A549 (cell line): ENCODE measurements at regions of chr3 and their contacts with region 1.

Region 1: GRCh38 chr3:134308350-134308891 is 57.8 kb upstream of the RYK start:
- DNase-seq: peak; percentile 69 to 83
- ATAC-seq: peak; percentile 77 to 78
- H3K4me3 ChIP-seq: no peak overlapping the region
- H3K27ac ChIP-seq: peak overlapping the region; percentile 97 to 100
- H3K4me1 ChIP-seq: peaks cover 53% of the 10 kb centered on the region
- CTCF ChIP-seq: peak; percentile 92
- EP300 ChIP-seq: 0 out of 5 replicates have a peak, but pooled peaks of 1 of the 2 experiments have one; percentile 15
- POLR2A ChIP-seq: no peak
- RAD21 ChIP-seq: peak; percentile 99

Region 2: GRCh38 chr3:134326760-134327593 is 18.6 kb after region 1 on chr3:
- CTCF ChIA-PET with region 1: interaction called, 17 read pairs
- POLR2A ChIA-PET with region 1: interaction called, 23 read pairs
- DNase-seq: peak in 1 of 2 experiments; percentile 94
- ATAC-seq: peak; percentile 82 to 85
- H3K4me3 ChIP-seq: peak overlapping the region; percentile 26
- H3K27ac ChIP-seq: peak overlapping the region; percentile 96 to 100
- H3K4me1 ChIP-seq: peaks cover 76% of the 10 kb centered on the region
- CTCF ChIP-seq: no peak
- EP300 ChIP-seq: peak; percentile 94 to 99; a peak in 4 of 5 replicates
- POLR2A ChIP-seq: no peak
- RAD21 ChIP-seq: peak; percentile 30 to 56; a peak in 3 of 5 replicates

Region 3: DNA sequence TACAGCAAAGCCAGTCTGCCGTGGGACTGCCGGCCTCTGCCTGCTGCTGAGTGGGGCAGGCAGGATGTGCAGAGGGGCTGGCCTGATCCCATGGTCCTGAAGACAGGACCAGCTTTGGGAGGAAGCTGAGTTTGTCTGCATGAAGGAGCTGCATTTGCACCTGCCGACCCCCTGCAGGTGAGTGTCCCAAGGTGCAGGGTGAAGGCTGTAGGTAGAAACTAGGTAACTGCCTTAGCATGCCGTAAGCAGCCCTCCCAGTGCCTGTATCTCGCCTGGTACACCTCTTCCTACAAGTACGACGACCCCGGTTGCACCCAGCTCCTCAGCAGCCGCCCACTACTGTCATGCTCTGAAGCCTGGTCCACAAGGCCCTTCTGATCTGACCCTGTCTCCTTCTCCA is 30.9 kb after region 1 on chr3:
- CTCF ChIA-PET with region 1: interaction called, 12 read pairs
- POLR2A ChIA-PET with region 1: interaction called, 5 read pairs
- DNase-seq: no peak
- ATAC-seq: 0 out of 6 replicates have a peak, but pooled peaks have one; percentile 11 to 30
- H3K4me3 ChIP-seq: no peak overlapping the region
- H3K27ac ChIP-seq: peak overlapping the region; percentile 96 to 100; a peak in 3 of 6 replicates
- H3K4me1 ChIP-seq: peaks cover 48% of the 10 kb centered on the region
- CTCF ChIP-seq: no peak
- EP300 ChIP-seq: no peak
- POLR2A ChIP-seq: no peak
- RAD21 ChIP-seq: no peak

Region 4: GRCh38 chr3:134364061-134364935 is 55.9 kb after region 1 on chr3:
- CTCF ChIA-PET with region 1: interaction called, 356 read pairs
- POLR2A ChIA-PET with region 1: interaction called, 49 read pairs
- DNase-seq: peak; percentile 93 to 94
- ATAC-seq: peak; percentile 74 to 82
- H3K4me3 ChIP-seq: peak overlapping the region; percentile 31; the same call in 2 of the 3 replicates
- H3K27ac ChIP-seq: peak overlapping the region; percentile 99 to 100
- H3K4me1 ChIP-seq: peaks cover 97% of the 10 kb centered on the region
- CTCF ChIP-seq: no peak
- EP300 ChIP-seq: peak; percentile 68 to 86; a peak in 3 of 5 replicates
- POLR2A ChIP-seq: no peak
- RAD21 ChIP-seq: peak in 1 of 2 experiments; percentile 37; a peak in 2 of 5 replicates

Region 5: GRCh38 chr3:134485718-134486576 is 177.5 kb after region 1 on chr3 and contains the starts of genes ANAPC13 and CEP63:
- CTCF ChIA-PET with region 1: interaction called, 438 read pairs
- POLR2A ChIA-PET with region 1: interaction called, 3 read pairs
- DNase-seq: peak; percentile 87 to 98
- ATAC-seq: peak; percentile 91 to 93
- H3K4me3 ChIP-seq: peak within 1 kb of the TSS; percentile 84
- H3K27ac ChIP-seq: peak within 1 kb of the TSS; percentile 95 to 99
- H3K4me1 ChIP-seq: peaks cover 21% of the 10 kb centered on the region
- CTCF ChIP-seq: no peak
- EP300 ChIP-seq: no peak
- POLR2A ChIP-seq: peak; percentile 47; the same call in 1 of the 2 replicates
- RAD21 ChIP-seq: no peak
- polyA plus RNA-seq, gene ANAPC13: 92.0 and 109 TPM in 2 replicates
- polyA plus RNA-seq, gene CEP63: 14.0 and 24.0 TPM in 2 replicates

Region 6: GRCh38 chr3:134536781-134537180 is 228.4 kb after region 1 on chr3:
- CTCF ChIA-PET with region 1: no interaction called
- POLR2A ChIA-PET with region 1: no interaction called
- DNase-seq: no peak
- ATAC-seq: no peak
- H3K4me3 ChIP-seq: no peak overlapping the region
- H3K27ac ChIP-seq: no peak overlapping the region
- H3K4me1 ChIP-seq: no peaks in the 10 kb centered on the region
- CTCF ChIP-seq: no peak
- EP300 ChIP-seq: no peak
- POLR2A ChIP-seq: no peak
- RAD21 ChIP-seq: no peak